HEK293 (cell line): ENCODE measurements at regions of chr14 and their contacts with region 1.

Region 1: GRCh38 chr14:20652996-20653975 is 11.8 kb upstream of the OR6S1 start:
- H3K4me3 ChIP-seq: peak overlapping the region; percentile 46
- H3K27ac ChIP-seq: no peak overlapping the region; the same call in 1 of the 2 replicates
- H3K4me1 ChIP-seq: no peaks in the 10 kb centered on the region
- CTCF ChIP-seq: no peak

Region 2: GRCh38 chr14:20632682-20633428 is 20.4 kb before region 1 on chr14:
- CTCF ChIA-PET with region 1: interaction called, 13 read pairs
- POLR2A ChIA-PET with region 1: interaction called, 11 read pairs
- H3K4me3 ChIP-seq: peak overlapping the region; percentile 65
- H3K27ac ChIP-seq: no peak overlapping the region; the same call in 1 of the 2 replicates
- H3K4me1 ChIP-seq: no peaks in the 10 kb centered on the region
- CTCF ChIP-seq: no peak

Region 3: GRCh38 chr14:20682435-20683124 is 29.3 kb after region 1 on chr14:
- CTCF ChIA-PET with region 1: interaction called, 13 read pairs
- POLR2A ChIA-PET with region 1: interaction called, 16 read pairs
- H3K4me3 ChIP-seq: peak overlapping the region; percentile 68
- H3K27ac ChIP-seq: peak overlapping the region; percentile 96
- H3K4me1 ChIP-seq: no peaks in the 10 kb centered on the region; the same call in 1 of the 2 replicates
- CTCF ChIP-seq: no peak

Region 4: GRCh38 chr14:20690848-20691523 is 37.7 kb after region 1 on chr14:
- CTCF ChIA-PET with region 1: interaction called, 21 read pairs
- POLR2A ChIA-PET with region 1: no interaction called
- H3K4me3 ChIP-seq: no peak overlapping the region
- H3K27ac ChIP-seq: no peak overlapping the region
- H3K4me1 ChIP-seq: no peaks in the 10 kb centered on the region
- CTCF ChIP-seq: peak; percentile 53

Region 5: GRCh38 chr14:20976291-20976690 is 323.0 kb after region 1 on chr14:
- CTCF ChIA-PET with region 1: no interaction called
- POLR2A ChIA-PET with region 1: no interaction called
- H3K4me3 ChIP-seq: no peak overlapping the region
- H3K27ac ChIP-seq: no peak overlapping the region
- H3K4me1 ChIP-seq: no peaks in the 10 kb centered on the region
- CTCF ChIP-seq: no peak